CD8-positive, alpha-beta T cell (primary cell): ENCODE measurements at regions of chr18 and their contacts with region 1.

Region 1: DNA sequence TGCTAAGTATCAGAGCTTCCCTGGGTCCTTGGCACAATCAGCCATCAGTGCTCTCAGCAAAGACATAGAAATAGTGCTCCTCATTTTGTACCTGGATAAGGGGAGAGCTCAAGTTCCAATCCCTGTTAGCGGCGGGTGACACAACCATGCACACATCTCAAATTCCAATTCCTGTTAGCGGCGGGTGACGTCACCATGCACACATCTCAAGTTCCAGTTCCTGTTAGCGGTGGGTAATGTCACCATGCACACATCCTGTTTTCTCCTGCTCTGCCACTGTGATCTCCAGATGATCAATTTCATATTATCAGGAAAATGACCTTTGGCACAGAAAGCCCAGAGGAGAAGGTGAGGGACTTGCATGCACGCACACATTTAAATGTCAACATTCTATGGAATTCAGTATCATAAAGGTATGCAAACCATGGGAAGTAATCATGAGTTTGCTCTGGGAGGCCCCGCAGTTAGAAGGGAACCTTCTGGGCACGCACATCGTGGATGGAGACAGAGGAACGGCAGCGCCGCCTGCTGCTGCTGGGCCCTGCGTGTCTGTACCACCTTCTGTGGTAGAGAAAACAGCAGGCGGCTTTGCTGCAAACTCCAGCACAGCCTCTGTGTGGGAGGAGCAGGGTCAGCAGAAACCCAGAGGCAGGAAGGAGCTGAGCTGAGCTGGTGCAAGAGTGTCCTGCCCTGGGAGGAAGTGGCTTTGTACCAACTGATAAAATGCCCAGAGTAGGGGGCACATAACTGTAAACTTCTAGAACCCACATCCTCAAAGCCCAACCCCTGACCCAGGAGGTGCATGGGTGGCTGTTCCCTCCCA is 77.8 kb downstream of the MBP start:
- DNase-seq: peak; percentile 68 to 94 (median 86)
- ATAC-seq: peak; percentile 78
- H3K4me3 ChIP-seq: peak overlapping the region; percentile 35 to 44
- H3K4me3 Mint-ChIP-seq: peak overlapping the region; percentile 71
- H3K27ac ChIP-seq: peak overlapping the region; percentile 80 to 95
- H3K27ac Mint-ChIP-seq: peak overlapping the region; percentile 98
- H3K4me1 ChIP-seq: peaks cover 64% of the 10 kb centered on the region
- H3K4me1 Mint-ChIP-seq: peaks cover 69% of the 10 kb centered on the region
- H3K27me3 ChIP-seq: no peaks in the 10 kb centered on the region
- H3K27me3 Mint-ChIP-seq: no peaks in the 10 kb centered on the region
- CTCF ChIP-seq: peak; percentile 53

Region 2: GRCh38 chr18:75691483-75691882 is 1363.3 kb before region 1 on chr18:
- CTCF ChIA-PET with region 1: no interaction called
- POLR2A ChIA-PET with region 1: no interaction called
- intact Hi-C with region 1: no loop called
- DNase-seq: no peak
- ATAC-seq: no peak
- H3K4me3 ChIP-seq: no peak overlapping the region
- H3K4me3 Mint-ChIP-seq: no peak overlapping the region
- H3K27ac ChIP-seq: no peak overlapping the region
- H3K27ac Mint-ChIP-seq: no peak overlapping the region
- H3K4me1 ChIP-seq: no peaks in the 10 kb centered on the region
- H3K4me1 Mint-ChIP-seq: no peaks in the 10 kb centered on the region
- H3K27me3 ChIP-seq: no peaks in the 10 kb centered on the region
- H3K27me3 Mint-ChIP-seq: no peaks in the 10 kb centered on the region
- CTCF ChIP-seq: no peak

Region 3: GRCh38 chr18:77067291-77068061 is 12.7 kb after region 1 on chr18:
- CTCF ChIA-PET with region 1: interaction called, 4 read pairs
- POLR2A ChIA-PET with region 1: interaction called, 10 read pairs
- intact Hi-C with region 1: loop called in 1 of 2 experiments (anchors 1 kb)
- DNase-seq: peak in 8 of 9 experiments; percentile 48 to 90 (median 74)
- ATAC-seq: peak; percentile 20
- H3K4me3 ChIP-seq: peak overlapping the region in 1 of 2 experiments; percentile 9
- H3K4me3 Mint-ChIP-seq: peak overlapping the region; percentile 66
- H3K27ac ChIP-seq: peak overlapping the region; percentile 58 to 87
- H3K27ac Mint-ChIP-seq: peak overlapping the region; percentile 97
- H3K4me1 ChIP-seq: peaks cover 99% of the 10 kb centered on the region
- H3K4me1 Mint-ChIP-seq: peaks cover 94% of the 10 kb centered on the region
- H3K27me3 ChIP-seq: no peaks in the 10 kb centered on the region
- H3K27me3 Mint-ChIP-seq: no peaks in the 10 kb centered on the region
- CTCF ChIP-seq: no peak

Region 4: DNA sequence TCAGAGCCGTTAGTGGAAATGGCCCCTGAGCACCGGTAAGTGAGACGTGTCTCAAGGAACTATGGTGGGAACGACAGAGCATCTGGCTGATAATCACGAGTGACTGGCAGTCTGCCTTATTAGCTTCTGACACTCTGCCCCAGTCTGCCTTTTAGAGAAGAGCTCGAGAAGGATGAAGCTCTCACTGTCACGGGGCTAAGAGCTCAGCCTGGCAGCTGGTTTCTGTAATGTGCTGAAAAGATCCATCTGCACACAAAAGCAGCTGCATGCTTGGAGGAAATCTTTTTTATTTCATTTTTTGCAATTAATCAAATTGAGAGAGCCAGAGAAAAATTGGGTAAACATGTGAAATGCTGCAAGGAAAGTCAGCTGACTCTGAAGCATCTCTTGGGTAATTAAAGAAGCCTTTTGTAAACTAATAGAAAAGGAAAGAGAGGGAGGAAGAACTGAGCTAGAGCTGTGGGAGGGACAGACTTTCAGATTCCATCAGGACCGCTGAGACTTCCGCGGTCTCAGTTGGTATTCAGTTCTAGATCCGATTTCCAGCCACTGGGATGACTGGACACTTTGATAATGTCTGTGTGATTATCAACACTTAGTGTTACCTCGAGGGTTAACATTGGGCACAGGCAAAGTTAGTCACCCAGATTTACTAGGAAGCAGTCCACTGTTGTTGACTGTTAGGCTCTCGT is 53.3 kb after region 1 on chr18:
- CTCF ChIA-PET with region 1: interaction called, 8 read pairs
- POLR2A ChIA-PET with region 1: interaction called, 3 read pairs
- intact Hi-C with region 1: loop called in 1 of 2 experiments (anchors 2 kb)
- DNase-seq: peak in 4 of 9 experiments; percentile 34 to 68 (median 54)
- ATAC-seq: peak; percentile 18
- H3K4me3 ChIP-seq: no peak overlapping the region
- H3K4me3 Mint-ChIP-seq: peak overlapping the region; percentile 55
- H3K27ac ChIP-seq: peak overlapping the region; percentile 31 to 87
- H3K27ac Mint-ChIP-seq: peak overlapping the region; percentile 94
- H3K4me1 ChIP-seq: peaks cover 82% of the 10 kb centered on the region
- H3K4me1 Mint-ChIP-seq: peaks cover 92% of the 10 kb centered on the region
- H3K27me3 ChIP-seq: no peaks in the 10 kb centered on the region
- H3K27me3 Mint-ChIP-seq: no peaks in the 10 kb centered on the region
- CTCF ChIP-seq: no peak

Region 5: GRCh38 chr18:77207540-77207939 is 152.7 kb after region 1 on chr18:
- CTCF ChIA-PET with region 1: interaction called, 20 read pairs
- POLR2A ChIA-PET with region 1: interaction called, 3 read pairs
- intact Hi-C with region 1: loop called (anchors 1 to 5 kb)
- DNase-seq: peak; percentile 29 to 80 (median 58)
- ATAC-seq: peak; percentile 93
- H3K4me3 ChIP-seq: no peak overlapping the region
- H3K4me3 Mint-ChIP-seq: peak overlapping the region; percentile 62
- H3K27ac ChIP-seq: no peak overlapping the region
- H3K27ac Mint-ChIP-seq: peak overlapping the region; percentile 34
- H3K4me1 ChIP-seq: peaks cover 40% of the 10 kb centered on the region
- H3K4me1 Mint-ChIP-seq: peaks cover 46% of the 10 kb centered on the region
- H3K27me3 ChIP-seq: no peaks in the 10 kb centered on the region
- H3K27me3 Mint-ChIP-seq: peaks cover 2% of the 10 kb centered on the region
- CTCF ChIP-seq: peak; percentile 57